Breast epithelium (tissue), 4 donors: ENCODE measurements at regions of chr19 and their contacts with region 1.

Region 1: GRCh38 chr19:10653715-10654492 is at the start of gene ILF3:
- DNase-seq: peak; percentile 100
- H3K4me3 ChIP-seq: peak within 1 kb of the TSS; percentile 96 to 100 (median 98)
- H3K27ac ChIP-seq: peak within 1 kb of the TSS; percentile 99
- H3K4me1 ChIP-seq: peaks cover 0 to 13% of the 10 kb centered on the region in 2 donors
- H3K27me3 ChIP-seq: no peaks in the 10 kb centered on the region
- CTCF ChIP-seq: peak in 2 of 3 donors; percentile 14 to 17
- POLR2A ChIP-seq: peak; percentile 99
- total RNA-seq, gene ILF3: 80.2 to 166 (median 115) TPM

Region 2: GRCh38 chr19:10580979-10581631 is 72.8 kb before region 1 on chr19:
- intact Hi-C with region 1: loop called (anchors 5 kb)
- DNase-seq: peak; percentile 87 to 90
- H3K4me3 ChIP-seq: peak overlapping the region in 1 of 3 donors; percentile 6
- H3K27ac ChIP-seq: peak overlapping the region in 1 of 2 donors; percentile 19
- H3K4me1 ChIP-seq: no peaks in the 10 kb centered on the region
- H3K27me3 ChIP-seq: no peaks in the 10 kb centered on the region
- CTCF ChIP-seq: peak; percentile 100
- POLR2A ChIP-seq: no peak

Region 3: GRCh38 chr19:10670182-10670581 is 16.3 kb after region 1 on chr19:
- intact Hi-C with region 1: no loop called
- DNase-seq: no peak
- H3K4me3 ChIP-seq: no peak overlapping the region
- H3K27ac ChIP-seq: no peak overlapping the region
- H3K4me1 ChIP-seq: peaks cover 0 to 5% of the 10 kb centered on the region in 2 donors
- H3K27me3 ChIP-seq: no peaks in the 10 kb centered on the region
- CTCF ChIP-seq: no peak
- POLR2A ChIP-seq: no peak

Region 4: GRCh38 chr19:11106477-11106876 is 452.6 kb after region 1 on chr19:
- intact Hi-C with region 1: no loop called
- DNase-seq: no peak
- H3K4me3 ChIP-seq: no peak overlapping the region
- H3K27ac ChIP-seq: no peak overlapping the region
- H3K4me1 ChIP-seq: no peaks in the 10 kb centered on the region
- H3K27me3 ChIP-seq: no peaks in the 10 kb centered on the region
- CTCF ChIP-seq: no peak
- POLR2A ChIP-seq: no peak